ENCODE measurements at regions of chr13 and their contacts with region 1.

Region 1: DNA sequence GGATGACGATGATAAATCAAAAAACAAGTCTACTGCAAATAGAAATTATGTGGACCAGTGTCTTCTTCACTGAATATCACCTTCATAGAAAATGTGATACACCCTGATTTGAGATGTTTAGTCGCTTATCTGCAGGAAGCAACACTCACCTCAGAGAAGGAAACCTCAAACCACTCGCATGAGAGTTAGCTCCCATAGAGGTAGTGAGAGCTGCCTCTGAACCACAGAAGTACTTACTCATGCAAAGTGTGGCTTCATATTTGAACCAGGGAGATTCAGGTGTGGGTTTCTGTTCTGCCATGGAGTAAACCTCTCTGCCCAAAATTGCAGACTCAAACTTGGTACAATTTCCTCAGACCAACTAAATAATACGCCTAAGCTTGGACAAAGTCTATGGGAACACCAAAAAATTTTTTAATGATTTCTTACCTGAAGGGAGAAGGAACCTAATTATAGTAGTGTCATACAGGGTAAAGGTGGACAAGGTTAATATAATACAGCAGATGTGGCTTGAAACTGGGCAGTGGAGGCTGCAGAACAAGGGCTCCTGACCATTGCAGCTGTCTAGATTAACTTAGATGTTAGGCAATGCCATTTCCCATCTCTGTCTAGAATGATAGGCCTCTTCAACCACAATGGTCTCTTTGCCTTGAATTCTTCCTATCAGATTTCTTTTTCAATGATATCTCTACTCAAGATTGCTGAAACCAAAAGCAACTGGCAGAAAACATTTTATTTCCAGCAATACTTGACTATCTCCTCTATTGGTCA is 29.6 kb upstream of the RCBTB2 start:
- DNase-seq: peak; percentile 77
- H3K4me3 Mint-ChIP-seq: no peak overlapping the region
- H3K27ac Mint-ChIP-seq: no peak overlapping the region
- H3K4me1 Mint-ChIP-seq: peaks cover 59% of the 10 kb centered on the region
- H3K27me3 Mint-ChIP-seq: peaks cover 68% of the 10 kb centered on the region

Region 2: GRCh38 chr13:48346583-48346982 is 215.9 kb before region 1 on chr13:
- intact Hi-C with region 1: loop called (anchors 1 kb)
- DNase-seq: no peak
- H3K4me3 Mint-ChIP-seq: no peak overlapping the region
- H3K27ac Mint-ChIP-seq: no peak overlapping the region
- H3K4me1 Mint-ChIP-seq: peaks cover 26% of the 10 kb centered on the region
- H3K27me3 Mint-ChIP-seq: no peaks in the 10 kb centered on the region

Region 3: GRCh38 chr13:48443442-48444208 is 118.9 kb before region 1 on chr13:
- intact Hi-C with region 1: loop called (anchors 2 kb)
- DNase-seq: no peak
- H3K4me3 Mint-ChIP-seq: peak overlapping the region; percentile 19
- H3K27ac Mint-ChIP-seq: peak overlapping the region; percentile 64
- H3K4me1 Mint-ChIP-seq: peaks cover 18% of the 10 kb centered on the region
- H3K27me3 Mint-ChIP-seq: no peaks in the 10 kb centered on the region

Region 4: DNA sequence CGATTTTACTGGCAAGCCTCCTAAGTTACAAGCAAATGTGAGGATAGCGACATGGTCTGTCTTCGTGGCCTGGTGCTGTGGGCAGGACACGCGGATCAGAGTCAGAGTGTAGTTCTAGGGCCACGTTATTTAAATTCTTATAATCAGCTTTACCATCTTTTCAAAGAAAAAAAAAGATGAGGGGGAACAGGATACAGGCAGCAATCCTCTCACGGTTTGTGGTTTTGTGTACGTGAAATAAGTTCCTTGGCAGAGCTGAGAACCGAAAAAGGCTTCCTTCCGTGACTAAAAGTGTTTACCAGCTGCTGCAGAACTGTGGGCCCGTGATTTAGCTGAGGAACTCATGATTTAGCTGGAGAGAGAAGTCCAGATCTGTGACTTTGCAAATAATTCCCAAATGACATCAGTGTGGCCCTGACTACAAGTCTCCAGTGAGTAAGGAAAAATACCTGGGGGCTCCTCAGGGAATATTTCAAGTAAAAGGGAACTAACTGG is 56.8 kb before region 1 on chr13:
- intact Hi-C with region 1: loop called (anchors 1 kb)
- DNase-seq: peak; percentile 57
- H3K4me3 Mint-ChIP-seq: peak overlapping the region; percentile 38
- H3K27ac Mint-ChIP-seq: peak overlapping the region; percentile 62
- H3K4me1 Mint-ChIP-seq: peaks cover 68% of the 10 kb centered on the region
- H3K27me3 Mint-ChIP-seq: peaks cover 4% of the 10 kb centered on the region

Region 5: DNA sequence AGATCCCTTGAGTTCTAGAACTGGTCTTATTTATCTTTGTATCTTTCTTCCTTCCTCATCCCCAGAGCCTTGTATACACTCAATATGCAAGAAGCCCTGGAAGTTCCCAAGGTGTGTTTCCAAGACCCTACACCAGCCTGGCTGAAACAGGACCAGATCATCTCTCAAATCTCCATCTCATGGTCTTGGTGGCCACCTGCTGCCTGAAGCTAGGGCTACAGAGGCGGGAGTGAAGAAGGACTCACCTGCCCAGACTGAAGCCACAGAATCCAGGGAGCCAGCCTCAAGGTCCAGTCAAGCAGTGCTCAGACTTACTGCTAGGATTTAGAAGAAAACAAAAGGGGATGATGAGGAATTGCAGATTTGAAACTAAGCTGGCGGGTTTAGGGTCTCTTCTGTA is 85.1 kb after region 1 on chr13:
- intact Hi-C with region 1: no loop called
- DNase-seq: no peak
- H3K4me3 Mint-ChIP-seq: no peak overlapping the region
- H3K27ac Mint-ChIP-seq: no peak overlapping the region
- H3K4me1 Mint-ChIP-seq: peaks cover 7% of the 10 kb centered on the region
- H3K27me3 Mint-ChIP-seq: peaks cover 4% of the 10 kb centered on the region